GM23248 (cell line): ENCODE measurements at regions of chr20 and their contacts with region 1.

Region 1: GRCh38 chr20:25669826-25670422 is 26.7 kb downstream of the ZNF337 start:
- DNase-seq: peak; percentile 84
- H3K4me3 ChIP-seq: no peak overlapping the region
- H3K27ac ChIP-seq: peak overlapping the region; percentile 35
- H3K4me1 ChIP-seq: peaks cover 5% of the 10 kb centered on the region
- H3K27me3 ChIP-seq: no peaks in the 10 kb centered on the region

Region 2: GRCh38 chr20:25136643-25137559 is 533.0 kb before region 1 on chr20:
- in situ Hi-C with region 1: no loop called
- DNase-seq: peak; percentile 94
- H3K4me3 ChIP-seq: no peak overlapping the region
- H3K27ac ChIP-seq: no peak overlapping the region; the same call in 1 of the 2 replicates
- H3K4me1 ChIP-seq: peaks cover 9% of the 10 kb centered on the region
- H3K27me3 ChIP-seq: peaks cover 31% of the 10 kb centered on the region; the same call in 1 of the 2 replicates

Region 3: GRCh38 chr20:25508078-25508770 is 161.7 kb before region 1 on chr20:
- in situ Hi-C with region 1: no loop called
- DNase-seq: peak; percentile 82
- H3K4me3 ChIP-seq: no peak overlapping the region
- H3K27ac ChIP-seq: peak overlapping the region; percentile 22; the same call in 1 of the 2 replicates
- H3K4me1 ChIP-seq: peaks cover 7% of the 10 kb centered on the region; the same call in 1 of the 2 replicates
- H3K27me3 ChIP-seq: no peaks in the 10 kb centered on the region

Region 4: GRCh38 chr20:26163890-26164289 is 494.0 kb after region 1 on chr20:
- in situ Hi-C with region 1: loop called (anchors 25 kb)
- DNase-seq: peak; percentile 86
- H3K4me3 ChIP-seq: no peak overlapping the region
- H3K27ac ChIP-seq: peak overlapping the region; percentile 42
- H3K4me1 ChIP-seq: peaks cover 62% of the 10 kb centered on the region
- H3K27me3 ChIP-seq: no peaks in the 10 kb centered on the region